Breast epithelium (tissue), 4 donors: ENCODE measurements at regions of chr4 and their contacts with region 1.

Region 1: DNA sequence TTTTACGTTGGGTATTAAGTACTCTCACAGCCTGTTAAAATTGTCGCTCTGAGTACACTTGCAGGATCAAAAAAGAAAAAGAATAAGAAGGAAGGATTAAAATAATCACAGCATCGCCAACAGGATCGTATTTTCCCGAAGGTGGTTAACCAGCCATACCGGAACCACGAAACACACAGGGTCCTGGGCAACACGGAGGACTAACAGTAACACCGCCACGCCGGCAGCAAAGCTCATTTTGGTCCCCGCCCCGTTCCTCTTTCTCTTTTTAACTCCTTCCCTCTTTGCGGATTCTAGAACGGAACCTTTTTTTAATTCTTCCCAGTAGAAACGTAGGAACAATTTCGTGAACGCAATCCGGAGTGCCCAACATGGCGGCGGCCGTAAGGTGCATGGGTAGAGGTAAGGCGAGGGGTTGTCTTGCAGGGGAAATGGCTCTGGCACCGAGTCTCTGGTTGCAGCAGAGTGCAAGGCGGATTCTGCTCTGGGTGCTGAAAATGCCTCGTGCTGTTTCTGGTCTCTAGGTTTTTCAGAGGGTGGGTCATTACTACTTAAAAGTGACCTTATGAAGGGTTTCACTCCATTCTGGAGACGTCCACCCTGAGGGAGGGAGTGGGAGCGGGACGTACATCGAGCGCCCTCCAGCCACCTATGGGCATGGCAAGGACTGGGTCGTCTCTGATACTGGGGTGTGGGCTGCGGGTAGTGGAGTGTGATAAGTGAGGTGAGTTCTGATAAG is at the start of gene MRPL1:
- DNase-seq: peak; percentile 87 to 89
- H3K4me3 ChIP-seq: peak within 1 kb of the TSS; percentile 57 to 82 (median 82)
- H3K27ac ChIP-seq: peak within 1 kb of the TSS; percentile 94 to 96
- H3K4me1 ChIP-seq: no peaks in the 10 kb centered on the region
- H3K27me3 ChIP-seq: no peaks in the 10 kb centered on the region
- CTCF ChIP-seq: peak in 1 of 3 donors; percentile 22
- POLR2A ChIP-seq: peak; percentile 25
- total RNA-seq, gene MRPL1: 17.1 to 26.3 (median 21.0) TPM

Region 2: DNA sequence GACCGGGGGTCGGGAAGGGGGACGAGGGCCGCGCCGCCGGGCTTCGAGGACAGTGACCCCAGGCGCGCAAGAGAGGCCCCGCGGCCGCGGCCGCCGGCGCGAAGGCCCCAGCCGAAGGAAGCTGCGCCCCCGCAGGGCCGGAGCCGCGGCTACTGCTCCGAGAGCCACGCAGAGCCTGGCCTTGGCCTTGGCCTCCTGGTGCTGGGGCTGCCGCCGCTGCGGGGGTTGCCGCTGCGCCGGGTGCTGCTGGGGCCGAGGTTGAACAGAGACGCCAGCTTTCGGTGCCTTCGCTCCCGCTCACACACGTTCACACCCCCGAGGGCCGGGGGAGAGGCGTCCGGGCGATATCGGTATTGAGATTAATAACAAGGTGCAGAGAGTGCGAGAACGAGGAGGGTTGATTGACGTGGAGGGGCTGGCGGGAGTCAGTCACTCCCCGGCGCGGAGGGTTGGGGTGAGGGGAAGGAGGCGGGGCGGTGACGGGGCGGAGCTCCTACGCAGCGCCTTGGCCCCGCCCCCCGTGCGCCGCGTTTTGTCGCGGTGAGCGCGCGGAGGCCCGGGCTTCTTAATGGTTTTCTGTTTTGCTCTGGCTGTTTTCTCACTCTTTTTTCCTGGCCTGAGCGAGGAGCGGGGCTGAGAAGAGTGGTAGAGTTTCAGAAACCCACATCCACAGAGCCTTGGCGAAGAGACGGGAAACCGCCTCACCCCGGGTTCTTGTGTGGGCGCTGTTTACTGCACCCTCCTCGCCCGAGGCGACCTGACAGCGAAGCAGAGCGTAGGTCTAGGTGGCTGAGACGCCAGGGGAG is 42.6 kb before region 1 on chr4:
- intact Hi-C with region 1: loop called (anchors 10 kb)
- DNase-seq: peak; percentile 84 to 94
- H3K4me3 ChIP-seq: peak overlapping the region; percentile 79 to 99 (median 95)
- H3K27ac ChIP-seq: peak overlapping the region; percentile 98 to 99
- H3K4me1 ChIP-seq: peaks cover 0 to 14% of the 10 kb centered on the region in 2 donors
- H3K27me3 ChIP-seq: no peaks in the 10 kb centered on the region
- CTCF ChIP-seq: peak in 1 of 3 donors; percentile 11
- POLR2A ChIP-seq: peak; percentile 92